Right ventricle myocardium inferior (tissue), 1 donor: ENCODE measurements at regions of chr5 and their contacts with region 1.

Region 1: GRCh38 chr5:56900858-56901578 is 8.4 kb upstream of the SETD9 start:
- DNase-seq: no peak
- ATAC-seq: peak; percentile 46

Region 2: GRCh38 chr5:57082441-57083067 is 181.5 kb after region 1 on chr5:
- intact Hi-C with region 1: loop called (anchors 2 kb)
- DNase-seq: no peak
- ATAC-seq: no peak

Region 3: DNA sequence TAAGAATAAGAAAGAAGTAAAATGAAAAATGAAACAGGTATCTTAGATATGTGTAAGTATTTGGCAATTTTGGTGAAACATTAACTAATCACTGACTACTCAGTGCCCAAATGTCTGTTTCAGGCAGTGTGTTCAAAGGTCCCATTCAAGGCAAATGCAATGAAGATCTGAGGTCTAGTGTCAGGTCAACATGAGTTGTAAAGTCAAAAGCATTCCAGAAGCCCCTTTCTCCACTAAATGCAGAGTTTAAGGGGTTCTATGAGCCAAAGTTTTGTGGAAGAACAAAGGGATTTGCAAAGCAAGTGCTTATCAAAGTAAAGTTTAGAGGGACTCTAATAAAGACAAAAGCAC is 201.9 kb after region 1 on chr5:
- intact Hi-C with region 1: no loop called
- DNase-seq: no peak
- ATAC-seq: no peak

Region 4: DNA sequence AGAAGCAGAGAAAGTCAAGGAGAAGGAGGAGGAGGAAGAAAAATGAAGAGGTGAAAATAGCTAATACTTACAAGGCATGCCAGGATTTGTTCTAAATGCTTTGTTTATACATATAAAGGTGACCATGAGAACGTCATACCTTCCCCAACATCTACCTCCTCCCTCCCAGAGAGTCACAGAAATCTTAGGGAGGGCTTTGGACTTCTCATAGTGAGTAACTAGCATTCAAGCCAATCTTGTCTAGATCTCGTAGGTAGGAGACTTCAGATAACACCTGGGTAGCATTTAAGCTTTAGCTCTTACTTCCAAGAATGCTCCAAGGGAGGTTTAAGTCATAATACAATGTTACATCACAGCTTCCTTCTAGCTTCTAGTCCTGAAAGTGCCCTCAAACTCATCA is 236.4 kb after region 1 on chr5:
- intact Hi-C with region 1: loop called (anchors 2 kb)
- DNase-seq: no peak
- ATAC-seq: no peak

Region 5: GRCh38 chr5:57277085-57277484 is 376.1 kb after region 1 on chr5:
- intact Hi-C with region 1: loop called (anchors 5 kb)
- DNase-seq: no peak
- ATAC-seq: no peak